ENCODE measurements at regions of chr2 and their contacts with region 1.

Region 1: GRCh38 chr2:146634256-146635097 is 1210.4 kb upstream of the ACVR2A start:
- DNase-seq: no peak
- ATAC-seq: no peak
- H3K4me3 ChIP-seq: no peak overlapping the region
- H3K4me3 Mint-ChIP-seq: no peak overlapping the region
- H3K27ac ChIP-seq: no peak overlapping the region
- H3K27ac Mint-ChIP-seq: no peak overlapping the region
- H3K4me1 ChIP-seq: no peaks in the 10 kb centered on the region
- H3K4me1 Mint-ChIP-seq: no peaks in the 10 kb centered on the region
- H3K27me3 ChIP-seq: no peaks in the 10 kb centered on the region
- H3K27me3 Mint-ChIP-seq: no peaks in the 10 kb centered on the region
- CTCF ChIP-seq: no peak

Region 2: DNA sequence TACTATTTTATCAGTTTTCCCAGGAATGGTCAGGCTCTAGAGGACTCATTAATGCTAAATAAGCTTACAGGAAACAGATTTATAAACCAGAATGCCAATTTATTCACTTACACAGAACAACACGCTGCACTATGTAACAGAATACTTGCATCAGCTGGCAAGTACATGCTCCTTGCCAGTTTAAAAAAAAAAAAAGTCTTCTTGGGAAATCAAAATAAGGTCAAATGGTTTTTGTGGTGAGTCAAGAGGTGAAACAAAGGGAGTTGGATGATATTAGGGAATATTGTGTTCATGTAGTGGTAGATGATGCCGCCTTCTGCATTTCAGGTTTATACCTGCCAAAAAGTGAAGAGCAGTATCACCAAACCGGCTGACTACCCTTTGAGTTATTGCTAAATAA is 792.5 kb before region 1 on chr2:
- CTCF ChIA-PET with region 1: no interaction called
- POLR2A ChIA-PET with region 1: no interaction called
- intact Hi-C with region 1: no loop called
- DNase-seq: no peak
- ATAC-seq: no peak
- H3K4me3 ChIP-seq: no peak overlapping the region
- H3K4me3 Mint-ChIP-seq: no peak overlapping the region
- H3K27ac ChIP-seq: no peak overlapping the region
- H3K27ac Mint-ChIP-seq: no peak overlapping the region
- H3K4me1 ChIP-seq: no peaks in the 10 kb centered on the region
- H3K4me1 Mint-ChIP-seq: no peaks in the 10 kb centered on the region
- H3K27me3 ChIP-seq: no peaks in the 10 kb centered on the region
- H3K27me3 Mint-ChIP-seq: no peaks in the 10 kb centered on the region
- CTCF ChIP-seq: no peak

Region 3: GRCh38 chr2:145994910-145995309 is 639.6 kb before region 1 on chr2:
- CTCF ChIA-PET with region 1: no interaction called
- POLR2A ChIA-PET with region 1: no interaction called
- intact Hi-C with region 1: no loop called
- DNase-seq: no peak
- ATAC-seq: no peak
- H3K4me3 ChIP-seq: no peak overlapping the region
- H3K4me3 Mint-ChIP-seq: no peak overlapping the region
- H3K27ac ChIP-seq: no peak overlapping the region
- H3K27ac Mint-ChIP-seq: no peak overlapping the region
- H3K4me1 ChIP-seq: no peaks in the 10 kb centered on the region
- H3K4me1 Mint-ChIP-seq: no peaks in the 10 kb centered on the region
- H3K27me3 ChIP-seq: no peaks in the 10 kb centered on the region
- H3K27me3 Mint-ChIP-seq: no peaks in the 10 kb centered on the region
- CTCF ChIP-seq: no peak

Region 4: GRCh38 chr2:147273106-147273505 is 638.6 kb after region 1 on chr2:
- CTCF ChIA-PET with region 1: no interaction called
- POLR2A ChIA-PET with region 1: no interaction called
- intact Hi-C with region 1: loop called in 1 of 2 experiments (anchors 5 kb)
- DNase-seq: no peak
- ATAC-seq: no peak
- H3K4me3 ChIP-seq: no peak overlapping the region
- H3K4me3 Mint-ChIP-seq: no peak overlapping the region
- H3K27ac ChIP-seq: no peak overlapping the region
- H3K27ac Mint-ChIP-seq: no peak overlapping the region
- H3K4me1 ChIP-seq: no peaks in the 10 kb centered on the region
- H3K4me1 Mint-ChIP-seq: no peaks in the 10 kb centered on the region
- H3K27me3 ChIP-seq: no peaks in the 10 kb centered on the region
- H3K27me3 Mint-ChIP-seq: peaks cover 2% of the 10 kb centered on the region
- CTCF ChIP-seq: no peak